ENCODE measurements at regions of chr11 and their contacts with region 1.

Region 1: GRCh38 chr11:10770626-10771254 is 19.7 kb downstream of the CTR9 start:
- DNase-seq: no peak
- ATAC-seq: no peak
- H3K4me3 ChIP-seq: no peak overlapping the region
- H3K4me3 Mint-ChIP-seq: no peak overlapping the region
- H3K27ac ChIP-seq: no peak overlapping the region
- H3K27ac Mint-ChIP-seq: peak overlapping the region in 1 of 9 donors; percentile 48
- H3K4me1 ChIP-seq: no peaks in the 10 kb centered on the region
- H3K4me1 Mint-ChIP-seq: peaks cover 0 to 4% (median 0%) of the 10 kb centered on the region in 7 donors
- H3K27me3 ChIP-seq: no peaks in the 10 kb centered on the region
- H3K27me3 Mint-ChIP-seq: no peaks in the 10 kb centered on the region

Region 2: GRCh38 chr11:10750838-10751580 is 19.7 kb before region 1 on chr11 and contains the start of gene CTR9:
- CTCF ChIA-PET with region 1: interaction called, 7 read pairs
- POLR2A ChIA-PET with region 1: interaction called, 3 read pairs
- intact Hi-C with region 1: loop called in 1 of 2 experiments (anchors 2 kb)
- DNase-seq: peak; percentile 78 to 94 (median 88)
- ATAC-seq: peak; percentile 96
- H3K4me3 ChIP-seq: peak within 1 kb of the TSS; percentile 79
- H3K4me3 Mint-ChIP-seq: peak within 1 kb of the TSS; percentile 95 to 99 (median 97)
- H3K27ac ChIP-seq: peak within 1 kb of the TSS; percentile 85
- H3K27ac Mint-ChIP-seq: peak within 1 kb of the TSS; percentile 90 to 96 (median 91)
- H3K4me1 ChIP-seq: peaks cover 7 to 8% of the 10 kb centered on the region in 2 donors
- H3K4me1 Mint-ChIP-seq: peaks cover 12 to 36% (median 31%) of the 10 kb centered on the region in 7 donors
- H3K27me3 ChIP-seq: no peaks in the 10 kb centered on the region
- H3K27me3 Mint-ChIP-seq: no peaks in the 10 kb centered on the region
- total RNA-seq, gene CTR9: 23.8 to 64.0 (median 47.8) TPM

Region 3: DNA sequence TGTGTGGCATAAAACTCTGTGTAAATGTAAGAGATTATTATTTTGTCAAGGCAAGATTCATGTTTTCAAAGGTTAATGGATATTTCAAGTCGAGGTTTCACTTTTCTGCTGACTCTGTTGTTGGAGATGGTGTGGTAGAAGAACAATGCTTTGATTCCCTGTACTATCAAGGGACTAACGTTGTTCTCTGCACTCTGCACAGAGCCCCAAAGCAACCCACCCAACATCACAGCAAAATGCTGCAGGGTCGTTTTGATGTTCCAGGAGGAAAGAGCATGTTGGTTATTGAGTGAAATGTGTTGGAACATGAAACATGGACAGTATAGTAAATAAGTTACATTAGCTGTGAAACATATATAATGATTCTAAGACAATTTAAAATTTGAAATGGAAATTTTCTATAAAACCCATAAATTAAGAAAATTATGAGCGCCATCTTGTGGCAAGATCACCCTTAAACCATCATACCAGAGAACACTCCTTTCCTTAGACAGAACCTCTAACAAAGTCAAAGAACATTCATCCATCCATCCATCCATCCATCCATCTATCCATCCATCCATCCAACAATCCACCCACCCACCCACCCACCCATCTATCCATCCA is 251.5 kb after region 1 on chr11:
- CTCF ChIA-PET with region 1: interaction called, 6 read pairs
- POLR2A ChIA-PET with region 1: no interaction called
- intact Hi-C with region 1: loop called in 1 of 2 experiments (anchors 1 kb)
- DNase-seq: peak in 4 of 9 donors; percentile 9 to 35 (median 26)
- ATAC-seq: peak; percentile 37
- H3K4me3 ChIP-seq: no peak overlapping the region
- H3K4me3 Mint-ChIP-seq: no peak overlapping the region
- H3K27ac ChIP-seq: no peak overlapping the region
- H3K27ac Mint-ChIP-seq: no peak overlapping the region
- H3K4me1 ChIP-seq: no peaks in the 10 kb centered on the region
- H3K4me1 Mint-ChIP-seq: no peaks in the 10 kb centered on the region
- H3K27me3 ChIP-seq: no peaks in the 10 kb centered on the region
- H3K27me3 Mint-ChIP-seq: peaks cover 0 to 17% (median 0%) of the 10 kb centered on the region in 5 donors

Region 4: DNA sequence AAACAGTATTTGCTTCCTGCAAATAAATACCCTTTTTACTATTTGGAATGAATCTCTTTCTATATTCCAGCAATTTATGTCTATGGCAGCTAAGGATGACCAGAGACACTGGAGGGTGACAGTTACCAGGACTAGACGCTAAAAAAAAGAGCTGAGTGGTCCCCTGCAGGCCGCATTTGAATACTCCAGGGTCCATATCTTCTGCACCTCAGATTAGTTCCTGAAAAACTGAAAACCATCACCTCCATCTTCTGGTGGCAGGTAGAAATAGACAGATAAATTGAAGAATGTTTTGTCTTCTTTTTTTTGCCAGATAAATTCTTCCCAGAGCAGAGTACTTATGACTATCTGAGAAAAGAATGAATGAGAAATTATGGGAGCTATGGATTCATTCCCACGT is 436.7 kb after region 1 on chr11:
- CTCF ChIA-PET with region 1: no interaction called
- POLR2A ChIA-PET with region 1: no interaction called
- intact Hi-C with region 1: no loop called
- DNase-seq: peak in 1 of 9 donors; percentile 2
- ATAC-seq: no peak
- H3K4me3 ChIP-seq: no peak overlapping the region
- H3K4me3 Mint-ChIP-seq: no peak overlapping the region
- H3K27ac ChIP-seq: no peak overlapping the region
- H3K27ac Mint-ChIP-seq: no peak overlapping the region
- H3K4me1 ChIP-seq: no peaks in the 10 kb centered on the region
- H3K4me1 Mint-ChIP-seq: no peaks in the 10 kb centered on the region
- H3K27me3 ChIP-seq: no peaks in the 10 kb centered on the region
- H3K27me3 Mint-ChIP-seq: peaks cover 10 to 34% (median 21%) of the 10 kb centered on the region in 5 donors

Region 5: GRCh38 chr11:11931461-11932055 is 1160.8 kb after region 1 on chr11:
- CTCF ChIA-PET with region 1: no interaction called
- POLR2A ChIA-PET with region 1: no interaction called
- intact Hi-C with region 1: loop called in 1 of 2 experiments (anchors 10 kb)
- DNase-seq: peak in 7 of 9 donors; percentile 7 to 45 (median 31)
- ATAC-seq: peak; percentile 75
- H3K4me3 ChIP-seq: no peak overlapping the region
- H3K4me3 Mint-ChIP-seq: no peak overlapping the region
- H3K27ac ChIP-seq: no peak overlapping the region
- H3K27ac Mint-ChIP-seq: no peak overlapping the region
- H3K4me1 ChIP-seq: no peaks in the 10 kb centered on the region
- H3K4me1 Mint-ChIP-seq: peaks cover 4 to 11% (median 8%) of the 10 kb centered on the region in 7 donors
- H3K27me3 ChIP-seq: no peaks in the 10 kb centered on the region
- H3K27me3 Mint-ChIP-seq: no peaks in the 10 kb centered on the region

Measured in naive thymus-derived CD4-positive, alpha-beta T cell (primary cell).